Right ventricle myocardium inferior (tissue), 1 donor: ENCODE measurements at regions of chr1 and their contacts with region 1.

Region 1: GRCh38 chr1:244451951-244452795 is 464 bp upstream of the ADSS2 start:
- DNase-seq: peak; percentile 99
- ATAC-seq: peak; percentile 99

Region 2: DNA sequence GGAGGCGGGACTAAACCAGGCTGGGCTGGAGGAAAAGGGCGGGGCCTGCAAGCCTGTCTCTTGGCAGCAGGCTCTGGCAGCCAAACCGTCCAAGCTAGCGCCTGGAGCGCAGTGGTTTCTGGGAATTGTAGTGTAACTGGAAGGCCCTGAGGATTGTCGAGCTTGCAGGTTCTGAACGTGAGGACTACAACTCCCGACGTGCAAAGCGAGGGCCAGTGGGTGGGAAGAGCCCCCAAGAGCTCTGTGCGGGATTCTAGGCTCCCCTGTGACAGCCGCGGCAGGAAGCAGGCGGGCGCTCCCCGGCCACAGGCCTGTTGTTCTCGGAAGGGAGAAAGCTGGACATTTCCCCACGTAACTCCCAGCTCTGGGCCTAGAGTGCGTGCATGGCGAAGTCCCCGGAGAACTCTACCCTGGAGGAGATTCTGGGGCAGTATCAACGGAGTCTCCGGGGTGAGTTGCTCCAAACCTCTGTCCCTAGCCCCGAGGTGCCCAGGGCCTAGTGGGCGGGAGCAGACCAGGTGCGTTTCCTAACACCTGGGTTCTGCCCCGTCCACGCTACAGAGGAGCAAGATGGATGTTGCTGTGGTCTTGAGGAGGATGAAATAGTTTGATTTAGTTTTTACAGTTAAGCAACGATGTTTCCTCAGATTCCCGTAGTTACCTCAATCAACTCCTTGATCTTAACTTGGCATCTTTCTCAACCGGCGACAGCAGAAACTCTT is 1196.2 kb before region 1 on chr1 and contains the start of gene SDCCAG8:
- intact Hi-C with region 1: loop called (anchors 5 kb)
- DNase-seq: peak; percentile 98
- ATAC-seq: peak; percentile 96
- total RNA-seq, gene SDCCAG8: 18.3 TPM

Region 3: DNA sequence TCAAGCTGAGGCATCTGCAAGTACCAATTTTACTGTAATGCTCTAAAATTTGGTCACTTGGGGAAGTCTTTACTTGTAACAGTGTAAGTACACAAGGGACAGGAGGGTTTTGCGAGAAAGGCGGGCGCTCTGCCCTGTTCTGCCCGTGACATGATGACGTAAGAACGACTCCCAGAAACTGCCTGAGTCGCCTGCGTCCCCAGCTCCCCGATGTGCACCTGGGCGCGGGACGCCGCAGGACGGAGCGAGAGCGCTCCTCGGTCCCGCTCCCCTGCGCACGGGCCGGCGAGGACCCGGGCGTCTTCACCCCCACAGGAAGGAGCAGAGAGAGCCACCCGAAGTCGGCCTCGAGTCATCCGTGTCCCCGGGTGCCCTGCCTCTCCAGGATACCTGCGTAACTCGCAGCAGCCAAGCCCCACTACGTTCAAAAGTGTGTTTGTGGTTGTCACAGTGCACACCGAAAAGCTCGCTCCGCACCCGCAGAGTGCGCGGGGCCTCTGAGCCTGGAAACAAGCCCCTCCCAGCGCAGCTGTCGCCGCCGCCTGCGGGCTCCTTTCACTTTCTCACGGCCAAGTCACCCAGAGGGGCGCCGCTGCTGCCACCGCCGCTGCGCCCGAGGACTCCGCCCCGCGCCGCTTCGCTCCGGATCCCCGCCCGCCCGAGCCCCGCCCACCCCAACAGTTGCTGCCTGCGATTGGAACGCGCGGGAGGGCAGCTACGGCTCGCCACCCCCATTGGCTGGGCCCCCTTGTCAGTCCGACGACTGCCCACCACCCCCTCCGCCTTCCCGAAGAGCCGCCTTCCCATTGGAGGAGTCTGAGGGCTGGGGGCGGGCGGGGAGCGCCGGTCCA is 404.3 kb before region 1 on chr1:
- intact Hi-C with region 1: loop called (anchors 5 kb)
- DNase-seq: peak; percentile 99
- ATAC-seq: peak; percentile 98

Region 4: GRCh38 chr1:244513493-244513892 is 61.3 kb after region 1 on chr1:
- intact Hi-C with region 1: no loop called
- DNase-seq: no peak
- ATAC-seq: no peak

Region 5: GRCh38 chr1:244652699-244653466 is 200.7 kb after region 1 on chr1 and contains the start of gene DESI2:
- intact Hi-C with region 1: loop called (anchors 10 kb)
- DNase-seq: peak; percentile 99
- ATAC-seq: peak; percentile 98
- total RNA-seq, gene DESI2: 21.2 TPM

Region 6: GRCh38 chr1:244970661-244971551 is 518.7 kb after region 1 on chr1:
- intact Hi-C with region 1: loop called (anchors 10 kb)
- DNase-seq: peak; percentile 97
- ATAC-seq: peak; percentile 91